PC-3 (cell line): ENCODE measurements at regions of chr20 and their contacts with region 1.

Region 1: DNA sequence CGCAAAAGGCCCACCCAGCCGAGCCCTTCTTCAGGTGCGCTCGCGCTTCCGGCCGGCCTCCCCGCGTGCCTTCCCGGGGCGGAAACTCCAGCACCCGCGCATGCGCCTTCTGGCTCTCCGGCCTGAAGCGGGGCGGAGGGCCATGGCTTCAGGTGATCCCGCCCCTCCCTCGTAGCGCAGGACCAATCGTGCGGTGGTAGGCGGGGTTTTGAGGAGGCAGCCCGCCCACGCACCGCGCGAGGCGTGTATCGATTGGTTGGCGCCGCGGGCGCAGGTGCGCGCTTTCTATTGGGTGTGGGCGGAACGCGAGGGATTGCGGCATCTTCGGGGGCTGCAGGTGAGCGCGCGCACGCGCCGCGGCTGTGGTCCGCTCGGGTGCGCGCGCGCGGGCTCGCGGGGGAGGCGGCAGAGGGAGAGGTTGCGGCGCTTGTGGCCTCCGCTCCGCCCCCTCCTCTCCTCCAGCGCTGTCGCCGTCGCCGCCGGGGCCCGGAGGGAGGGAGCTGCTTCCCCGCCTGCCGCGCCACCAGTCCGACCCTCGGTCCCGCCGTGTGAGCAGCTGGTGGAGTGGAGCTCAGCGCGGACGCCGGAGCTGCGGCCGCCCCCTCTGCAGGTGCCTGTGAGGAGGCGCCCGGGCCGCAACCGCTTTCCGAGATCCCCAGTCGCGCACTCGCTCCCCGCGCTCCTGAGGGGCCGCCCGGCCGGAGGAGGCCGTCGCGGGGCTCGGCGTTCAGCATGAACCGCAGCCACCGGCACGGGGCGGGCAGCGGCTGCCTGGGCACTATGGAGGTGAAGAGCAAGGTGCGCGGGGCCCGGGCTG is at the start of gene PARD6B:
- DNase-seq: peak; percentile 100
- ATAC-seq: peak; percentile 83
- H3K4me3 ChIP-seq: peak within 1 kb of the TSS; percentile 79
- H3K27ac ChIP-seq: peak within 1 kb of the TSS; percentile 6; the same call in 1 of the 2 replicates
- H3K4me1 ChIP-seq: peaks cover 60% of the 10 kb centered on the region
- H3K27me3 ChIP-seq: no peaks in the 10 kb centered on the region
- CTCF ChIP-seq: no peak
- total RNA-seq, gene PARD6B: 3.7 and 4.3 TPM in 2 replicates

Region 2: GRCh38 chr20:50115591-50116372 is 615.5 kb before region 1 on chr20:
- CTCF ChIA-PET with region 1: no interaction called
- POLR2A ChIA-PET with region 1: no interaction called
- intact Hi-C with region 1: loop called (anchors 10 kb)
- DNase-seq: peak; percentile 100
- ATAC-seq: peak; percentile 73
- H3K4me3 ChIP-seq: peak overlapping the region; percentile 74
- H3K27ac ChIP-seq: no peak overlapping the region
- H3K4me1 ChIP-seq: peaks cover 31% of the 10 kb centered on the region
- H3K27me3 ChIP-seq: no peaks in the 10 kb centered on the region
- CTCF ChIP-seq: no peak

Region 3: DNA sequence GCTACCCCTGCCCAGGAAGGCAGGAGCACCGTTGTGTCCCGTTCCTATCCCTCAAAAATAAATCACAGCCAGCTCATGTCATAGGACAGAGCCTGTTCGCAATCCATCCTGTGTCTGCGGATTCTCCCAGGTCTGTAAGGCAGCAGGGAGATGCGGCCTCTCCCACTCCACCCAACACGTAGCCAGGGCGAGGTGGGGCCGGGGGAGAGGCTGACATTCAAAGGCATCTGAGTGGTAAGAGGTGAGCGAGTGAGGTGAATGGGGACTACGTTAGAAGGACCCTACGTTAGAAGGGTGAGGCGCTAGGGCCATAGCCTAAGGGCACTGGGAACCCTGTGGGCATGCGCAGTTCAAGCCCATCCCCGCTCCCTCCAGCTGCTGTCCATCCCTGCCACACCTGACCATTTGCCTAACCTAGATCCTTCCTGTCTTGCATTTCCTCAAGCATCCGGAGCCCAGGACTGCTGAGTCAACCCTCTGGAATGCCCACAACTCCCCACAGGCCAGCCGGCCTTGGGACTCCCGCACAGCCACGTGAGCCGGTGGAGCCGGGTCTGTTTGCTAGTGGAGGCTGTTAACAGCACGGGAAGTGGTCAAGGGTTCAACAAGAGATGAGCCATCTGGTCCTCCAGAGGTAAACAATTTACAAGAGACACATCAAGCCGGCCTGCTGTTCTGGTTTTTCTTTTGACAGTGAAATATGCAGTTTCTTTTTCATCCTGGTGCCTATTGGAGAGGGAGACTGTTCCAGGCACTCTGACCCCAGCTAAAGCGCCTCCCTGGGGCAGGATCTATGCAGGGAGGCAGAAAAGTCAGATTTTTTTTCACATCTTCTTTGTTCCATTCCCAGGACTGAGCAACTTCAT is 85.8 kb before region 1 on chr20:
- CTCF ChIA-PET with region 1: no interaction called
- POLR2A ChIA-PET with region 1: no interaction called
- intact Hi-C with region 1: loop called (anchors 1 kb)
- DNase-seq: peak; percentile 99
- ATAC-seq: peak; percentile 97
- H3K4me3 ChIP-seq: peak overlapping the region; percentile 13; the same call in 1 of the 2 replicates
- H3K27ac ChIP-seq: peak overlapping the region; percentile 75
- H3K4me1 ChIP-seq: peaks cover 40% of the 10 kb centered on the region
- H3K27me3 ChIP-seq: no peaks in the 10 kb centered on the region
- CTCF ChIP-seq: no peak

Region 4: DNA sequence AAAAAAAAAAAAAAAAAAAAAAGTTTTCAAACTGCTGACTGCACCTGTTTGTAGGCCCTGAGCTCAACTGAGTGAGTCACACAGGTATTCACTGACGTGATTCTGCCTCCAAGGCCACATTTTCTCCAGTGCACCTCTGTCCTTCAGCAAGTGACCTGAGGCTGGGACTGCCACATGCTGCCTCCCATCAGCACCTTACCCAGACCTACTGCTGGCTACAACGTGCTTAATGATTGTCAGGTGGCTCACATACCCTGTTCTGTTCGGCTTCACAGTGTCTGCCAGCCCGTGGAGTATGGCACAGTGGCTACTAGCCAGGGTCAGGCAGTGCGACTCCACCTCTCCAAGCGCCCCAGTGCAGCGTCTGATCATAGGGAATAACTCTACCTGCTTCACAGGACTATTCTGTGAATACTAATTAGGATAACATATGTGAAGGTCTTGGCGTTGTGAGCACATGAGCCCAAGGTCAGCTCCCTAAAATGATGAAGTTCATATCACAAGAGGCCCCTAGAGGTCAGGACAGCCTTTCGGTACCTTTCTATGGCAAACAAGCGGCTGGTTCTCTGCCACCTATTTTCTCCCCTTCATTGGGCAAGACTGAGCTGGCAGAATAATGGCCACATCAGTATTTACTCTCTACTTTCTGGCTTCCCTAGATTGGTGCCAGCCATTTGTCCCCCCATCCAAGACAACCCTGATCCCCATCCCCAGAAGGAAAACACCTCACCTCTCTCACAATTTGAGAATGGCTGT is 68.0 kb before region 1 on chr20:
- CTCF ChIA-PET with region 1: interaction called, 3 read pairs
- POLR2A ChIA-PET with region 1: no interaction called
- intact Hi-C with region 1: loop called (anchors 5 kb)
- DNase-seq: peak; percentile 83
- ATAC-seq: peak; percentile 57
- H3K4me3 ChIP-seq: no peak overlapping the region
- H3K27ac ChIP-seq: peak overlapping the region; percentile 43
- H3K4me1 ChIP-seq: peaks cover 44% of the 10 kb centered on the region
- H3K27me3 ChIP-seq: no peaks in the 10 kb centered on the region
- CTCF ChIP-seq: peak; percentile 59